ENCODE measurements at regions of chr1 and their contacts with region 1.

Region 1: DNA sequence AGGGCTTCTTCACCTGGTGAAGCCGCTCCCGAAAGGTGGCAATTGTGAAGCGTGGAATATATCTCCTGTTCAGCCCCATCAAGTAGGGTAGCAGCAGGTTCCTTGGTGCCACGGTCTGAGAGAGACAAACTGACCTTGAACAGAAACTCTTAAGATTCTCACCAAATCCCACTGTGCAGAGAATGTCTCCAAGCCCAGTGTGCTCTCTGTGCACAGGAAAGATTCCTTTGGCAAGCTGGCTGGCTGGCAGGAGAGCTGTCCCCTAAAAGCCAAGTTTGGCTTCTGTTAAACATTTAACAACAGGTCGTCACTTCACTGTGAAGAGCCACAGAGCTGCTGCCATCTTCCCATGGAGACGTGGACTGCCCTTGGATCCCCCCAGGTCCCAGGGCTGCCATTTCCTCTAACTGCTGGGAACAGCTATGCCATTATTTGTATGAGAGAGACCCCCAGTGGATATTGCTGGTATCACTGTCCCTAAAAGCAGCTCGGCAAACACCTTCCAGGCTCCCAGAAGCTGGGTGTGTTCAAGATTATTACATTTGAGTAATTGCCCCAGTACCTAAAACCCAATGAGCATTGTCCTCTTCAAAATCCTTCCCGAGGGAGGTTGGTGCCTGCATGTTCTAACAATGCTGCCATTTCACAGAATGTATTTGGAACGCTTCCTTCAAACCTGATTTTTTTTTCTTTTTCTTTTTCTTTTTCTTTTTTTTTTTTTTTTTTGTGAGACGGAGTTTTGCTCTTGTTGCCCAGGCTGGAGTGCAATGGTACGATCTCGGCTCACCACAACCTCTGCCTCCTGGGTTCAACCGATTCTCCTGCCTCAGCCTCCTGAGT is 71.8 kb downstream of the CD58 start:
- DNase-seq: peak; percentile 54
- H3K4me3 Mint-ChIP-seq: no peak overlapping the region
- H3K27ac Mint-ChIP-seq: peak overlapping the region; percentile 53
- H3K4me1 Mint-ChIP-seq: peaks cover 64% of the 10 kb centered on the region
- H3K27me3 Mint-ChIP-seq: no peaks in the 10 kb centered on the region

Region 2: GRCh38 chr1:116151739-116152576 is 347.1 kb before region 1 on chr1:
- CTCF ChIA-PET with region 1: interaction called, 19 read pairs
- POLR2A ChIA-PET with region 1: no interaction called
- DNase-seq: peak; percentile 78
- H3K4me3 Mint-ChIP-seq: peak overlapping the region; percentile 31
- H3K27ac Mint-ChIP-seq: no peak overlapping the region
- H3K4me1 Mint-ChIP-seq: peaks cover 8% of the 10 kb centered on the region
- H3K27me3 Mint-ChIP-seq: peaks cover 23% of the 10 kb centered on the region

Region 3: GRCh38 chr1:116605315-116605714 is 106.3 kb after region 1 on chr1:
- CTCF ChIA-PET with region 1: no interaction called
- POLR2A ChIA-PET with region 1: no interaction called
- DNase-seq: no peak
- H3K4me3 Mint-ChIP-seq: no peak overlapping the region
- H3K27ac Mint-ChIP-seq: no peak overlapping the region
- H3K4me1 Mint-ChIP-seq: peaks cover 19% of the 10 kb centered on the region
- H3K27me3 Mint-ChIP-seq: no peaks in the 10 kb centered on the region